ENCODE measurements at regions of chr3 and their contacts with region 1.

Region 1: DNA sequence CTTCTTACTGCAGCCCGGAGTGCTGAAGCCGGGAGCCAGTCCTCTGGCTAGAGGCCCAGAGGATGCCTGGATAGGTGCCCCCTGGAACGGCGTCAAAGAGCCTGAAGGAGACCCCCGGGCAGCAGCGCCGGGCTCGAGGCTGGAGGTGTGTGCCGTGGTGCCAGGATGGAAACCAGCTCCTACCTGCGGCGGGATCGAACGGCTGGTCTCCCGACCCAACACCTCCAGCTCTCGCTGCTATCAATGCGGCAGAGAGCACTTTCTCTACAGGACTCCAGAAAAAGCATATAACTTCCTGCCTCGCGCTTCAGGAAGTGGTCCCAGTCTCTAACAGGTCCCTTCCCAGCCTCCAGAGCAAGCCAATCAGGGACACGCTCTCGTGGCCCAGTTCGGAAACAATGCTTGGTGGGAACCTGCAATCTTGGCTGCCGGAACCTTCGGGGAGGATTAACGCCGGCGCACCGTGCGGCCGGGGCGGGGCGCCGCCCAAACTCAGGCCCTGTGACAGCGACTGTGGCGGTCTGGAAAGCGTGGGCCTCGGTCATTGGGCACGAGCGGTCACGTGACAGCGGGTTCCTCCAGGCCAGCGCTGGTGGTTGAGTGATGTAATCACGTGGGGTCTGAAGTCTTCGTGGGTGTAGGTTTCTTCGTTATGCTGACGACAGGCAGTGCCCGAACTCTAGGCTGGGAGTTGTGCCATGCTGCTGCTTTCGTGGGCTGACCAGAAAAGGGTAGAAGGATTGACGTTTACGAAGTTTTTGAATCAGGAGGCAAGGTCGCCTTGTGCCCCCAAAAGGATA is at the start of gene SLC33A1:
- DNase-seq: peak; percentile 96 to 100 (median 99)
- ATAC-seq: peak; percentile 90 to 93 (median 91)
- H3K4me3 ChIP-seq: peak within 1 kb of the TSS; percentile 89 to 99
- H3K4me3 Mint-ChIP-seq: peak within 1 kb of the TSS; percentile 94 to 98 (median 97)
- H3K27ac ChIP-seq: peak within 1 kb of the TSS; percentile 97
- H3K27ac Mint-ChIP-seq: peak within 1 kb of the TSS; percentile 100
- H3K4me1 ChIP-seq: peaks cover 23 to 49% of the 10 kb centered on the region in 2 experiments
- H3K4me1 Mint-ChIP-seq: peaks cover 36 to 46% (median 42%) of the 10 kb centered on the region in 3 donors
- H3K27me3 ChIP-seq: no peaks in the 10 kb centered on the region
- H3K27me3 Mint-ChIP-seq: no peaks in the 10 kb centered on the region
- total RNA-seq, gene SLC33A1: 17.4 to 33.1 (median 28.5) TPM

Region 2: GRCh38 chr3:155101398-155101797 is 752.9 kb before region 1 on chr3:
- CTCF ChIA-PET with region 1: no interaction called
- POLR2A ChIA-PET with region 1: no interaction called
- DNase-seq: no peak
- ATAC-seq: no peak
- H3K4me3 ChIP-seq: no peak overlapping the region
- H3K4me3 Mint-ChIP-seq: no peak overlapping the region
- H3K27ac ChIP-seq: no peak overlapping the region
- H3K27ac Mint-ChIP-seq: no peak overlapping the region
- H3K4me1 ChIP-seq: no peaks in the 10 kb centered on the region
- H3K4me1 Mint-ChIP-seq: no peaks in the 10 kb centered on the region
- H3K27me3 ChIP-seq: no peaks in the 10 kb centered on the region
- H3K27me3 Mint-ChIP-seq: no peaks in the 10 kb centered on the region

Region 3: GRCh38 chr3:155815030-155815429 is 39.3 kb before region 1 on chr3:
- CTCF ChIA-PET with region 1: no interaction called
- POLR2A ChIA-PET with region 1: no interaction called
- DNase-seq: no peak
- ATAC-seq: no peak
- H3K4me3 ChIP-seq: no peak overlapping the region
- H3K4me3 Mint-ChIP-seq: no peak overlapping the region
- H3K27ac ChIP-seq: no peak overlapping the region
- H3K27ac Mint-ChIP-seq: no peak overlapping the region
- H3K4me1 ChIP-seq: no peaks in the 10 kb centered on the region
- H3K4me1 Mint-ChIP-seq: no peaks in the 10 kb centered on the region
- H3K27me3 ChIP-seq: peaks cover 0 to under 1% of the 10 kb centered on the region in 2 experiments
- H3K27me3 Mint-ChIP-seq: peaks cover 5 to 6% of the 10 kb centered on the region in 2 donors

Region 4: GRCh38 chr3:155870133-155870944 is 16.0 kb after region 1 on chr3 and contains the start of gene GMPS:
- CTCF ChIA-PET with region 1: interaction called, 4 to 17 read pairs
- POLR2A ChIA-PET with region 1: interaction called, 3 to 5 read pairs
- DNase-seq: peak; percentile 86 to 98 (median 94)
- ATAC-seq: peak; percentile 91 to 94 (median 92)
- H3K4me3 ChIP-seq: peak within 1 kb of the TSS; percentile 67 to 80
- H3K4me3 Mint-ChIP-seq: peak within 1 kb of the TSS; percentile 92 to 96 (median 95)
- H3K27ac ChIP-seq: peak within 1 kb of the TSS; percentile 93
- H3K27ac Mint-ChIP-seq: peak within 1 kb of the TSS; percentile 96 to 97
- H3K4me1 ChIP-seq: peaks cover 9 to 23% of the 10 kb centered on the region in 2 experiments
- H3K4me1 Mint-ChIP-seq: peaks cover 20 to 32% (median 31%) of the 10 kb centered on the region in 3 donors
- H3K27me3 ChIP-seq: no peaks in the 10 kb centered on the region
- H3K27me3 Mint-ChIP-seq: no peaks in the 10 kb centered on the region
- total RNA-seq, gene GMPS: 37.4 to 44.1 (median 40.6) TPM